Motor neuron (in vitro differentiated cells): ENCODE measurements at regions of chr6 and their contacts with region 1.

Region 1: GRCh38 chr6:149925974-149926777 is 3.3 kb upstream of the RAET1G start:
- ATAC-seq: peak; percentile 69 to 89 (median 85)
- H3K4me3 ChIP-seq: peak overlapping the region in 4 of 5 donors; percentile 8 to 24 (median 21)
- H3K27ac ChIP-seq: no peak overlapping the region
- H3K4me1 ChIP-seq: peaks cover 3 to 5% of the 10 kb centered on the region in 2 donors

Region 2: GRCh38 chr6:149834513-149835481 is 91.4 kb before region 1 on chr6:
- in situ Hi-C with region 1: loop called in 1 of 9 experiments (anchors 10 kb)
- ATAC-seq: peak in 1 of 8 experiments; percentile 27
- H3K4me3 ChIP-seq: no peak overlapping the region
- H3K27ac ChIP-seq: no peak overlapping the region
- H3K4me1 ChIP-seq: no peaks in the 10 kb centered on the region

Region 3: DNA sequence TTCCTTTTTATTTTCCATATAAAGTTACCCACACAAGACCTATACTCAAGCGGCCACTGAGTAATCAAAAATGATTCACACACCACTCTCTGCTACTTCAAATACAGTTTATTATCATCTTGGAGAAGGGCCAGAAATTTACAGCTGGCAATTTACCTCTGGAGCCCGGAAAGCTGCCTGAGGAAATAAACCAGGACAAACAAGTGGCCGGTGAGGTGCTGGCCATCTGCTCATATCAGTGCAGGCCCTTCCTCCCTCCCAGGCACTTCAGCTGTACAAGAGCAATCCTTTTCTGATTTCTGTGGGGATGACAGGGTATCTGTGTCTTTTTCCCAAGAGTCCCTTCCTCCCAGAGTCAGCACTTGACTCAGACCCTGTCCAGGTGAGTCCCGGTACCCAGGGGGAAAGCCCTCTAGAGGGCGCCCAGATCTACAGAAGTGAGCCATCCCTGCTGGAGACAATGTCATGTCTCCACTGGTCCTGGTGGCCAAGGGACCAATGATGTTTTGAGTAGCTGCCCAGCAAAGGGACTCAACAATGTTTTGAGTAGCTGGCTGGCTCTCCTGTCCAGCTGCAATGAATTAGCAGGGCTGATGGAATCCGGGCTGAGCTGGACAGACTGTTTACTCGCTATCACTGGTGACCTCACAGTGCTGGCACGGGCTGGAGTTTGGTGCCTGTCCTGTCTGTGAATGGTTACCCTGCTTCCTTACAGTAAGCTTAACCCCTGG is 85.7 kb before region 1 on chr6:
- in situ Hi-C with region 1: loop called in 2 of 9 experiments (anchors 10 kb)
- ATAC-seq: peak in 6 of 8 experiments; percentile 37 to 98 (median 96)
- H3K4me3 ChIP-seq: no peak overlapping the region
- H3K27ac ChIP-seq: no peak overlapping the region
- H3K4me1 ChIP-seq: no peaks in the 10 kb centered on the region

Region 4: DNA sequence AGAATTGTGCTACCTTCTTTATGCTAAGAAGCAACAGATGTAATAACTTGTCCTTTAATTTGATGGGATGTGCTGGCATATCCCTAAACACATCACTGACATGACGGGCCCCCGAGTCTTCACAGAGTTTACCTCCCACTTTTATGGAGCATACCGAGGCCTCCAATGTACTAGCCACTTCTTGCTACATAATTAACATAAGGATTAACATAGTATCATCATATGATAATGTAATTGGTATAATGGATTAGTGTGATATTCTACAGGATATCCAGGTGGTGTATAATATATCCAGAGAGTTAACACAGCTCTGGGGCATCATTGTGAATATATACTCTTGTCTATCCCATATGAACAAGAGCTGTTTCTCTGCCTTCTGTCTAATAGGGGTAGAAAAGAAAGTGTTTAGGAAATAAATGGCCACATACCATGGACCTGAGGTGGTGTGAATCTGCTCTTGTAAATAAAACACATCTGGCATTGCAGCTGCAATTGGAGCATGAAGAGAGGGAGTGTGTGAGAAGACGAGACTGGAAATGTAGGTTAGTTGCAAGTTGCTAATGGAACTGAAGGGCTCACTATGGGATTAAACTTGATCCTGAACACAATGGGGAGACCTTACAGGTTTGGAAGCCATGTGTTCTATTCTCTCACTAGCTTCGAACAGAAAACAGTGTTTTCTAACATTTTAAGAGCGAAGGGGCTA is 544.9 kb after region 1 on chr6:
- in situ Hi-C with region 1: no loop called
- ATAC-seq: peak in 3 of 8 experiments; percentile 51 to 63 (median 56)
- H3K4me3 ChIP-seq: no peak overlapping the region
- H3K27ac ChIP-seq: no peak overlapping the region
- H3K4me1 ChIP-seq: peaks cover 0 to 2% of the 10 kb centered on the region in 2 donors